Heart right ventricle (tissue), 16 donors: ENCODE measurements at regions of chr14 and their contacts with region 1.

Region 1: DNA sequence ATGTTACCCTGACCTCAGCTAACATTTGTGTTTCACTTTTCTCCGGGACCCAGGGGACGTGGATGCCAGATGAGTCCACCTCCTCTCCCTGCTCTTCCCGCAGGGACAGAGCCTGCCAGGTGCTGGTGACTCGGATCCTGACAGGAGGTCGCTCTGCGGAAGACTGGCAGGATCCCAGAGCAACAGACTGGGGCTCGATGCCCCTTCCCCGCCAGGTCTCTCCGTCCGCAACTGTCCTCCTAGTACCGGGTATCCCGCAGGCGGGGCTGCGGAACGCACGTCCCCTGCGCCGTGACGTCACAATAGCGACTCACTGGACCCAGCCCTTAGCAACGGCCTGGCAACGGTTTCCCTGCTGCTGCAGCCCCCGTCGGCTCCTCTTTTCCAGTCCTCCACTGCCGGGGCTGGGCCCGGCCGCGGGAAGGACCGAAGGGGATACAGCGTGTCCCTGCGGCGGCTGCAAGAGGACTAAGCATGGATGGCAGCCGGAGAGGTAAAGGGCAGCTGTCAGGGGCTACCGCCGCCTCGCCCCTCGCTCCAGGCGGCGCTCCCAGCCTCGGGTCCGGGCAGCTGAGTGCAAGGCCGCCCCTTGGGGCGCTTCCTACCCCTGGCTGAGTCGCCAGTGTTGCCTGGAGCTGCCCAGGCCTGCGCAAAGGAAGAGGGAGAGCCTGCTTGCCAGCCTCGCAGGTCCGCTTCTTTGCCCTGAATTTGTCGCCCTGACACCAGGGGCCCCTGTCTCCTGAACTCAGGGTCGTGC is at the start of gene SPATA7:
- DNase-seq: peak; percentile 94 to 95
- ATAC-seq: peak; percentile 99 to 100 (median 100)
- H3K4me3 ChIP-seq: peak within 1 kb of the TSS; percentile 55 to 95 (median 72)
- H3K27ac ChIP-seq: peak within 1 kb of the TSS in 9 of 10 donors; percentile 64 to 88 (median 80)
- H3K4me1 ChIP-seq: peaks cover 0 to 19% (median 14%) of the 10 kb centered on the region in 9 donors
- H3K27me3 ChIP-seq: no peaks in the 10 kb centered on the region
- CTCF ChIP-seq: peak in 2 of 9 donors; percentile 15 to 20
- total RNA-seq, gene SPATA7: 5.1 to 14.7 (median 9.2) TPM

Region 2: DNA sequence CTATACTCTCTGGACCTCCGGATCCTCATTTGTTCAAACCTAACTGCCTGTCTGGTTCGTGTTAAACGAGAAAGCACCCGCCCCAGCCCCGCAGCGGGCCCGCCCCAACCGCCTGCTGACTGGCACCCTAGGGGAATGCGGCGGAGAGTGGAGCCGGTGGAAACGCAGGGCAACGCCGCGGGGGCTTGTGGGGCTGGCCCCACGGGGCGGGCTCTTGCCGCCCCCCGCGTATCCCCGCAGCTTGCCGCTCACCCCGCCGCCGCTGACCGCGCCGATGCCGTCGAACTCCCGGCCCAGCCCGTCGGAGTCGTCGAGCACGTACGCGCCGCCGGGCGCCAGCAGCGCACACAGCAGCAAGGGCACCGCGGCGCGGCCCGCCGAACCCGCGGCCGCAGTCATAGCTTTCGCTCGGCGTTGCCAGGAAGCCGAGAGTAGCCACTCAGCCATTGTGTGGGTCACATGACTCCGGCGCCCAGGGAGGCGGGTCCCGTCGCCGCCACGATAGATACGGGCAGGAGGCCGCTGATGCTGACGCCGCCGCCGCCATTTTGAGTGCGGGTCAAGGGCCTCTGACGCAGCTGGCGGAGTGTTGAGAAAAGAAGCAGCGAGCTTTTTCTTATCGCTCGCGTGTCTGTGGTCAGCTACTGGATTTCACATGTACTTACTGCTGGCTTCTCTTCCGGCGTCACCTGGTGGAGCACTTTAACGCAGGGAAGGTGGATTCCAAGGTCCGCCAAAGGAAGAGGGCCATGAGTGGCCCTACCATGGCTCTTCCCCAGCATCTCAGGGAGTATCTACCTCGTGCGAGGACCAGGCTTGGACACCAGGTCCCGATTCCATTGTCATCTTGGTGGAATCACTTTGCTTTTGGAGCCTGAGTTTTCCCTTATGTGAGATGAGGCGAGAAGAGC is 392.6 kb before region 1 on chr14 and contains the start of gene GALC:
- intact Hi-C with region 1: loop called in 1 of 10 experiments (anchors 10 kb)
- DNase-seq: peak; percentile 95 to 96
- ATAC-seq: peak; percentile 96 to 97 (median 97)
- H3K4me3 ChIP-seq: peak within 1 kb of the TSS; percentile 31 to 88 (median 78)
- H3K27ac ChIP-seq: peak within 1 kb of the TSS; percentile 78 to 99 (median 94)
- H3K4me1 ChIP-seq: peaks cover 0 to 54% (median 18%) of the 10 kb centered on the region in 9 donors
- H3K27me3 ChIP-seq: no peaks in the 10 kb centered on the region
- CTCF ChIP-seq: no peak
- total RNA-seq, gene GALC: 11.2 to 19.4 (median 14.9) TPM

Region 3: GRCh38 chr14:88013750-88014349 is 371.7 kb before region 1 on chr14:
- intact Hi-C with region 1: loop called in 1 of 10 experiments (anchors 10 kb)
- DNase-seq: peak; percentile 23 to 69
- ATAC-seq: peak; percentile 72 to 94 (median 90)
- H3K4me3 ChIP-seq: no peak overlapping the region
- H3K27ac ChIP-seq: peak overlapping the region in 1 of 10 donors; percentile 46
- H3K4me1 ChIP-seq: peaks cover 0 to 63% (median 0%) of the 10 kb centered on the region in 9 donors
- H3K27me3 ChIP-seq: no peaks in the 10 kb centered on the region
- CTCF ChIP-seq: peak; percentile 79 to 95 (median 89)

Region 4: GRCh38 chr14:88189417-88190191 is 195.9 kb before region 1 on chr14:
- intact Hi-C with region 1: loop called in 6 of 10 experiments (anchors 5 to 10 kb)
- DNase-seq: peak in 1 of 2 donors; percentile 78
- ATAC-seq: peak; percentile 86 to 95 (median 93)
- H3K4me3 ChIP-seq: peak overlapping the region in 6 of 10 donors; percentile 19 to 38 (median 30)
- H3K27ac ChIP-seq: no peak overlapping the region
- H3K4me1 ChIP-seq: peaks cover 0 to 14% (median 3%) of the 10 kb centered on the region in 9 donors
- H3K27me3 ChIP-seq: peaks cover 0 to 34% (median 25%) of the 10 kb centered on the region in 7 donors
- CTCF ChIP-seq: peak; percentile 26 to 78 (median 71)

Region 5: GRCh38 chr14:88305528-88306322 is 79.8 kb before region 1 on chr14:
- intact Hi-C with region 1: no loop called
- DNase-seq: no peak
- ATAC-seq: no peak
- H3K4me3 ChIP-seq: no peak overlapping the region
- H3K27ac ChIP-seq: no peak overlapping the region
- H3K4me1 ChIP-seq: no peaks in the 10 kb centered on the region
- H3K27me3 ChIP-seq: peaks cover 0 to 4% (median 0%) of the 10 kb centered on the region in 7 donors
- CTCF ChIP-seq: no peak

Region 6: GRCh38 chr14:88551094-88551870 is 165.8 kb after region 1 on chr14:
- intact Hi-C with region 1: loop called in 2 of 10 experiments (anchors 10 kb)
- DNase-seq: peak; percentile 81 to 87
- ATAC-seq: peak; percentile 72 to 91 (median 84)
- H3K4me3 ChIP-seq: peak overlapping the region; percentile 16 to 90 (median 78)
- H3K27ac ChIP-seq: peak overlapping the region; percentile 26 to 82 (median 76)
- H3K4me1 ChIP-seq: peaks cover 3 to 86% (median 54%) of the 10 kb centered on the region in 9 donors
- H3K27me3 ChIP-seq: peaks cover 0 to 55% (median 0%) of the 10 kb centered on the region in 7 donors
- CTCF ChIP-seq: peak in 7 of 9 donors; percentile 20 to 64 (median 47)

Region 7: GRCh38 chr14:88562831-88563686 is 177.5 kb after region 1 on chr14 and contains the start of gene ZC3H14:
- intact Hi-C with region 1: loop called in 3 of 10 experiments (anchors 10 kb)
- DNase-seq: peak; percentile 82 to 91
- ATAC-seq: peak; percentile 98 to 99 (median 98)
- H3K4me3 ChIP-seq: peak within 1 kb of the TSS; percentile 69 to 98 (median 87)
- H3K27ac ChIP-seq: peak within 1 kb of the TSS; percentile 76 to 97 (median 94)
- H3K4me1 ChIP-seq: peaks cover 2 to 24% (median 21%) of the 10 kb centered on the region in 9 donors
- H3K27me3 ChIP-seq: no peaks in the 10 kb centered on the region
- CTCF ChIP-seq: no peak
- total RNA-seq, gene ZC3H14: 35.4 to 49.4 (median 38.7) TPM